ENCODE measurements at regions of chr16 and their contacts with region 1.

Region 1: DNA sequence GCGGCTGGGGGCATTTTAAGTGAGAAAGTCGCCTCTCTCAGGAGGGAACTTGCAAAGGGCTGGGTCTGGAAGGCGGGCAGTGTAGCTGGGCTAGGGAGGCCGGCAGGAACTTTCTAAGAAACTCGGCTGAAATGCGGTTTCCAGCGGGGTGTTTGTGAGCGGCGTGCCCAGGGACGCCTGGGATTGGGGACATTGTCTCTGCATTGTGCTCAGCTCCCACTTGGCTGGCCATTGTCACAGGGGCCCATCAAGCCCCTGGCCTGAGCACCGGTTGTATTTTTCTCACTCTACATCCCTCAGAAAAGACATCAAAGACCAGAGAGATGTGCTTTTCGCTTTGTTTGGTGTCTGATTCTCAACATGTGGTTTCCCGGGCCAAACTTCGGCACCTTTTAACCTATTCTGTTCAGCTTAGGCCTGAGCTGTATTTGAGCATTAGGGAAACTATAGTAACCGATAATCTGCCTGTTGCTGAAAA is 291.1 kb upstream of the IRX3 start:
- DNase-seq: no peak
- H3K4me3 ChIP-seq: no peak overlapping the region
- CTCF ChIP-seq: no peak

Region 2: GRCh38 chr16:54511241-54511731 is 66.4 kb before region 1 on chr16:
- in situ Hi-C with region 1: no loop called
- DNase-seq: peak; percentile 63
- H3K4me3 ChIP-seq: no peak overlapping the region
- CTCF ChIP-seq: no peak

Region 3: GRCh38 chr16:54522584-54522983 is 55.1 kb before region 1 on chr16:
- in situ Hi-C with region 1: loop called (anchors 5 kb)
- DNase-seq: no peak
- H3K4me3 ChIP-seq: no peak overlapping the region
- CTCF ChIP-seq: no peak

Measured in astrocyte of the cerebellum (primary cell).